ENCODE measurements at regions of chr11 and their contacts with region 1.

Region 1: GRCh38 chr11:75388386-75389275 is 10.7 kb upstream of the RPS3 start:
- DNase-seq: peak; percentile 92
- H3K4me3 ChIP-seq: no peak overlapping the region
- H3K27ac ChIP-seq: no peak overlapping the region
- H3K4me1 ChIP-seq: no peaks in the 10 kb centered on the region
- H3K27me3 ChIP-seq: no peaks in the 10 kb centered on the region
- CTCF ChIP-seq: peak; percentile 95

Region 2: GRCh38 chr11:75280227-75280701 is 108.4 kb before region 1 on chr11:
- CTCF ChIA-PET with region 1: interaction called, 11 read pairs
- POLR2A ChIA-PET with region 1: no interaction called
- intact Hi-C with region 1: loop called (anchors 1 kb)
- DNase-seq: peak; percentile 85
- H3K4me3 ChIP-seq: no peak overlapping the region
- H3K27ac ChIP-seq: no peak overlapping the region
- H3K4me1 ChIP-seq: no peaks in the 10 kb centered on the region
- H3K27me3 ChIP-seq: no peaks in the 10 kb centered on the region
- CTCF ChIP-seq: peak; percentile 98

Region 3: DNA sequence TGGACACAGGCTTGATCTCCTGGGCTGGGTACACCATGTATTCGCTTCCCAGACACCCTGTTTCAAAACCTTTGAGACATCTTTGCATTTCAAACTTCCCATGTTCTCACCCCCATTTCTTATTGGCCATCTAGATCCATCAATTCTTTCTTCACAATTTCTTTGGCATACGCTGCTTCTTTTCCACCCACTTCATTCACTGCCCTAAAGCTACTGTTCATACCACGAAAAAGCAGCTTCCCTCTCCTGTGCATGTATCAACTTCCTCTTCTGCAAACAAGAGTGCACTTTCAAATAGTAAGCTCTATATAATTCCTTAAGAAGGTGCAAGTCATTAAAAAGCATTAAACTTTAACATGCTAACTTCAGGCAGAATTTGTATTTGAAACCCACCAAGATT is 447.8 kb after region 1 on chr11:
- CTCF ChIA-PET with region 1: no interaction called
- POLR2A ChIA-PET with region 1: no interaction called
- intact Hi-C with region 1: no loop called
- DNase-seq: no peak
- H3K4me3 ChIP-seq: no peak overlapping the region
- H3K27ac ChIP-seq: no peak overlapping the region
- H3K4me1 ChIP-seq: no peaks in the 10 kb centered on the region
- H3K27me3 ChIP-seq: no peaks in the 10 kb centered on the region
- CTCF ChIP-seq: no peak

Region 4: GRCh38 chr11:76919887-76920746 is 1531.5 kb after region 1 on chr11:
- CTCF ChIA-PET with region 1: no interaction called
- POLR2A ChIA-PET with region 1: no interaction called
- intact Hi-C with region 1: no loop called
- DNase-seq: peak; percentile 94
- H3K4me3 ChIP-seq: no peak overlapping the region
- H3K27ac ChIP-seq: no peak overlapping the region
- H3K4me1 ChIP-seq: peaks cover 6% of the 10 kb centered on the region
- H3K27me3 ChIP-seq: no peaks in the 10 kb centered on the region
- CTCF ChIP-seq: peak; percentile 98

Measured in A673 (cell line).